Lower leg skin (tissue), 4 donors: ENCODE measurements at regions of chr1 and their contacts with region 1.

Region 1: DNA sequence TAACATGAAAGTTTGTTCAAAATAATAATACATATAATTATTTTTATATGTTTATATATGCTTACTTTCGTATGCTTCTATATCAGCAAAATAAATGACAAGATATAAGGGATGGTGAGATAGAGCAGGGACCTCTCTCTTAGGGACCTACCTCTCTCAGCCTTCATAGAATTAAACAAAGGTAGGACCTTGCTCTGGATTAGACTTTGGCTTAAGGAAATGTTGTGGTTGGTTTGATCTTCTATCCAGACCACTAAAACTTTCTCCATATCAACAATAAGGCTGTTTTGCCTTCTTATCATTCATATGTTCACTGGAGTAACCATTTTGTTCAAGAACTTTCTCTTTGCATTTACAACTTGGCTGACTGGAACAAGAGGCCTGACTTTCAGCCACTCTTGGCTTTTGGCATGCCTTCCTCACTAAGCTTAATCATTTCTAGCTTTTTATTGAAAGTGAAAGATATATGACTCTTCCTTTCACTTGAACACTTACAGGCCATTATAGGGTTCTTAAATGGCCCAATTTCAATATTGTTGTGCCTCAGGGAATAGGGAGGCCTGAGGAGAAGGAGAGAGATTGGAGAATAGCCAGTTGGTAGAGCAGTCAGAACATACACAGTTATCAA is 14.4 kb downstream of the FRRS1 start:
- DNase-seq: no peak
- H3K4me3 ChIP-seq: no peak overlapping the region
- CTCF ChIP-seq: no peak
- POLR2A ChIP-seq: no peak

Region 2: GRCh38 chr1:98893371-98893770 is 858.6 kb before region 1 on chr1:
- intact Hi-C with region 1: loop called (anchors 5 kb)
- DNase-seq: no peak
- H3K4me3 ChIP-seq: no peak overlapping the region
- CTCF ChIP-seq: no peak
- POLR2A ChIP-seq: no peak